CD14-positive monocyte (primary cell): ENCODE measurements at regions of chr17 and their contacts with region 1.

Region 1: GRCh38 chr17:56939901-56940343 is 20.9 kb downstream of the COIL start:
- DNase-seq: peak; percentile 62 to 89 (median 75)
- H3K4me3 ChIP-seq: no peak overlapping the region
- H3K4me3 Mint-ChIP-seq: no peak overlapping the region
- H3K27ac ChIP-seq: no peak overlapping the region
- H3K27ac Mint-ChIP-seq: peak overlapping the region in 6 of 7 donors; percentile 26 to 66 (median 38)
- H3K4me1 ChIP-seq: no peaks in the 10 kb centered on the region
- H3K4me1 Mint-ChIP-seq: peaks cover 2% of the 10 kb centered on the region
- H3K27me3 ChIP-seq: no peaks in the 10 kb centered on the region
- H3K27me3 Mint-ChIP-seq: no peaks in the 10 kb centered on the region
- CTCF ChIP-seq: peak; percentile 87

Region 2: GRCh38 chr17:56819431-56820145 is 120.3 kb before region 1 on chr17:
- intact Hi-C with region 1: loop called (anchors 2 to 5 kb)
- DNase-seq: peak; percentile 59 to 71 (median 70)
- H3K4me3 ChIP-seq: no peak overlapping the region
- H3K4me3 Mint-ChIP-seq: no peak overlapping the region
- H3K27ac ChIP-seq: no peak overlapping the region
- H3K27ac Mint-ChIP-seq: no peak overlapping the region
- H3K4me1 ChIP-seq: no peaks in the 10 kb centered on the region
- H3K4me1 Mint-ChIP-seq: peaks cover 4% of the 10 kb centered on the region
- H3K27me3 ChIP-seq: no peaks in the 10 kb centered on the region
- H3K27me3 Mint-ChIP-seq: peaks cover 0 to 8% (median 6%) of the 10 kb centered on the region in 3 donors
- CTCF ChIP-seq: peak; percentile 92

Region 3: GRCh38 chr17:56891784-56892183 is 48.1 kb before region 1 on chr17:
- intact Hi-C with region 1: loop called in 1 of 2 experiments (anchors 5 kb)
- DNase-seq: peak in 1 of 3 donors; percentile 40
- H3K4me3 ChIP-seq: no peak overlapping the region
- H3K4me3 Mint-ChIP-seq: no peak overlapping the region
- H3K27ac ChIP-seq: no peak overlapping the region
- H3K27ac Mint-ChIP-seq: no peak overlapping the region
- H3K4me1 ChIP-seq: no peaks in the 10 kb centered on the region
- H3K4me1 Mint-ChIP-seq: peaks cover 4% of the 10 kb centered on the region
- H3K27me3 ChIP-seq: no peaks in the 10 kb centered on the region
- H3K27me3 Mint-ChIP-seq: no peaks in the 10 kb centered on the region
- CTCF ChIP-seq: peak; percentile 71

Region 4: DNA sequence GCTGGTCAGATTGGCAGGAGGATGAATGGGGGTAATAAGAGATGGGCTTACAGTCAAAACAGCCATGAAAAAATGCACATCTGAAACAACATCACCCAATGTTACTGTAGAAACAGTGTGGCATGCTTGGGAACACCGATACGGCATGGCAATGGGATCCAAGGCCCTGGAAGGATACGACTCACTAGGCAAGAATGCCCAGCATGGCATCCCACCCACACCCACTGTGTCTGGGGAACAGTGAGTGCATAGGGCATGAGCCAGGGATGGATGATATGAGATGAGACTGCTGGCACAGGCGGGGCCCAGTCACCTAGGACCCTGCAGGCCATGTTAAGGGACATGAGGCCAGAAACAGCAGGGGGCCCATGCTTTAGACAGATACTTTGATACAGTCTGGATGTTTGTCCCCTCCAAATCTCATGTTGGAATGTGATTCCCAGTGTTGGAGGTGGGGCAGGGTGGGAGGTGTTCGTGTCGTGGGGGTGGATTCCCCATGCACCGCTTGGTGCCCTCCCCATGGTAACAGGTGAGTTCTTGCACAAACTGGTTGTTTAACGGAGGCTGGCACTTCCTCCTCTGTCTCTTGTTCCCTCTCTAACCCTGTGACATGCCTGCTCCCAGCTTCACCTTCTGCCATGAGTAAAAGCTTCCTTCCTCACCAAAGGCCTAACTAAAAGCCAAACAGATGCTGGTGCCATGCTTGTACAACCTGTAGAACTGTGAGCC is 37.4 kb before region 1 on chr17:
- intact Hi-C with region 1: loop called in 1 of 2 experiments (anchors 5 kb)
- DNase-seq: no peak
- H3K4me3 ChIP-seq: no peak overlapping the region
- H3K4me3 Mint-ChIP-seq: no peak overlapping the region
- H3K27ac ChIP-seq: peak overlapping the region in 1 of 2 donors; percentile 62
- H3K27ac Mint-ChIP-seq: peak overlapping the region in 4 of 7 donors; percentile 14 to 59 (median 36)
- H3K4me1 ChIP-seq: peaks cover 11 to 12% of the 10 kb centered on the region in 2 donors
- H3K4me1 Mint-ChIP-seq: peaks cover 43% of the 10 kb centered on the region
- H3K27me3 ChIP-seq: no peaks in the 10 kb centered on the region
- H3K27me3 Mint-ChIP-seq: peaks cover 0 to 1% (median 1%) of the 10 kb centered on the region in 3 donors
- CTCF ChIP-seq: no peak

Region 5: GRCh38 chr17:57385975-57386374 is 446.1 kb after region 1 on chr17:
- intact Hi-C with region 1: no loop called
- DNase-seq: no peak
- H3K4me3 ChIP-seq: no peak overlapping the region
- H3K4me3 Mint-ChIP-seq: no peak overlapping the region
- H3K27ac ChIP-seq: no peak overlapping the region
- H3K27ac Mint-ChIP-seq: no peak overlapping the region
- H3K4me1 ChIP-seq: no peaks in the 10 kb centered on the region
- H3K4me1 Mint-ChIP-seq: no peaks in the 10 kb centered on the region
- H3K27me3 ChIP-seq: no peaks in the 10 kb centered on the region
- H3K27me3 Mint-ChIP-seq: no peaks in the 10 kb centered on the region
- CTCF ChIP-seq: no peak